B cell (primary cell): ENCODE measurements at regions of chr6 and their contacts with region 1.

Region 1: DNA sequence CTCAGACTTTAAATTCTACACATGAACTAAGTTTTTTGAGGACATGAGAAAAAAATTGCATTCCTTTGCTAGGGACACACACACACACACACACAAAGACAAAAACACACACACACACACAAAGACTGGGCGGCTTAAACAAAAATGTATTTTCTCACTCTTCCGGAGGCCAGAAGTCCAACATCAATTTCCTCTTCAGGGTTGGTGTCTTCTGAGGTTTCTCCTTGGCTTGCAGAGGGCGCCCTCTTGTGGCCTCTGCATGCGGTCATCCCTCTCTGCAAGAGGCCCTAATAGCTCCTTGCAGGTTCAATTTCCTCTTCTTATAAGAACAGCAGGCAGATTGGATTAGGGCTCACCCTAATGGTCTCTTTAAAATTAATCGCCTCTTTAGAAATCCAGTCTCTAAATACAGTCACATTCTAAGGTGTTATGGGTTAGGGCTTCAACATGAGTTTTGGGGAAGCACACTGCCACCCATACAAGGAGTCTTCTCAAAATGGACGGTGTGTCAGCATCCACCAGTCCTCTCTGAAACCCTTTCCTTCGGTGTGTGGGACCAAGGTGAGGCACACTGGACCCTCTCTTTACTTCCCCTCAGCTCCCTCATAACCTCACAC is 61.4 kb downstream of the GPR6 start:
- DNase-seq: peak; percentile 90
- ATAC-seq: peak; percentile 85
- H3K4me3 ChIP-seq: peak overlapping the region; percentile 43 to 62 (median 59)
- H3K4me3 Mint-ChIP-seq: peak overlapping the region; percentile 88
- H3K27ac ChIP-seq: peak overlapping the region; percentile 48 to 66
- H3K27ac Mint-ChIP-seq: peak overlapping the region; percentile 86
- H3K4me1 ChIP-seq: peaks cover 8 to 28% of the 10 kb centered on the region in 2 donors
- H3K4me1 Mint-ChIP-seq: peaks cover 20% of the 10 kb centered on the region
- H3K27me3 ChIP-seq: no peaks in the 10 kb centered on the region
- H3K27me3 Mint-ChIP-seq: no peaks in the 10 kb centered on the region
- CTCF ChIP-seq: peak; percentile 82

Region 2: DNA sequence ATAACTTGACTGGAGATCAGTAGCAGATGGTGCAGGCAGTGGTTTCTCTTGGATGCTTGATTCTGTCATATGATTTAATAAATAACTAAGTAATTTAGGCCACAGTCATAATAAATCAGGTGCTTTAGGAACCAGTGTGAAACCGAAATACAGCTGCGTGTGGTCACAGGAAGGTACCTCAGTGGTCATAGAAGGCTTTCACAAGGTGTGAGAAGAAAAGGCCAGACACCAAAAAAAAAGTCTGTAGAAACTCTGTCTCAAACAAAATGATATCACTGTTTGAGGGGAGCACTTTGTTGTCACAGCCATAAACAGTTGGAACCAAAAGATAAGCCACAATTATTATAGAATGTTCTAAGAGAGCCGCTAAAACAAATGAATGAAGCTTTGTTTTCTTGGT is 1134.7 kb before region 1 on chr6:
- CTCF ChIA-PET with region 1: no interaction called
- POLR2A ChIA-PET with region 1: no interaction called
- intact Hi-C with region 1: no loop called
- DNase-seq: peak; percentile 56
- ATAC-seq: peak; percentile 49
- H3K4me3 ChIP-seq: no peak overlapping the region
- H3K4me3 Mint-ChIP-seq: peak overlapping the region; percentile 44
- H3K27ac ChIP-seq: peak overlapping the region; percentile 46 to 77
- H3K27ac Mint-ChIP-seq: peak overlapping the region; percentile 80
- H3K4me1 ChIP-seq: peaks cover 50 to 54% of the 10 kb centered on the region in 2 donors
- H3K4me1 Mint-ChIP-seq: peaks cover 42% of the 10 kb centered on the region
- H3K27me3 ChIP-seq: no peaks in the 10 kb centered on the region
- H3K27me3 Mint-ChIP-seq: no peaks in the 10 kb centered on the region
- CTCF ChIP-seq: no peak

Region 3: DNA sequence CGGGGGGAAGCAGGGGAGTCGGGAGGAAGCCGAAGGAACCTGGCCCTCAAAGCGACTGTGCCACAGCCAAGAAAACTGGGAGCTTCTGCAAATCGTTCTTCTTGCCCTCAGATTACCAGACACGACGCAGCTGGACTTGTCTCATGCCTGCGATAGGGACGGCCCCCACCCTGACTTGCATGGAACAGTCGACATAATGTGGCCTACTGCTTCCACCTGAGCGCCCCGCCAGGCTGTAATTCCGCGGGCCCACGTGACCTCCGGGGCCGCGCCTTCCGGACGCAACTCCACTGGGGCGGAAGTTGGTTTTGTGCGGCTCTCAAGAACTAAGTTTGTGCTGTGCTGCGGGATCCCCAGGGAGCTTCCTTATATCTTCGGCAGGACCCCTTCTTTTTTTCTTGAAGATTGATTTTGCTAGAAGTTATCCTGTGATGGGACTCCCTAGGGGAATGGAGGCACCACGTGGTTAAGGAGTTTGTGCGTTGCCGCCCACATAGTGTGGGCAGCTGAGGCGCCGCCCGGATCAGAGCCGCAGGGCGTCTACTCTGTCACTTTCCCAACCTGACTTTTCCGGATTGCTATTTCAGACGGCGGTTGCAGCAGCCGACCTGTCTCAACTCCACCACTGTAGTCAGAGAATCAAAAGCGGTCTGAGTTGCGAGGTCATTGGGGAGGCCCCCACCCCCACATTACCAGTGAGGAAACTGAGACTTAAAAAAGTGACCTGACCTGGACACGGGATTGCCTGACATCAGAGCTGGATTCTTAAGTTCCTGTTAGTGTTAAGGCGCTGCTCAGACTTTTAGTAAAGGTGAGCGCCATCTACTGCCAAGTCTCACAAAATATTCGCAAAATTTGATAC is 656.7 kb before region 1 on chr6:
- CTCF ChIA-PET with region 1: interaction called, 4 read pairs
- POLR2A ChIA-PET with region 1: no interaction called
- intact Hi-C with region 1: loop called (anchors 5 kb)
- DNase-seq: peak; percentile 99
- ATAC-seq: peak; percentile 71
- H3K4me3 ChIP-seq: peak overlapping the region; percentile 87 to 98 (median 90)
- H3K4me3 Mint-ChIP-seq: peak overlapping the region; percentile 94
- H3K27ac ChIP-seq: peak overlapping the region; percentile 94 to 97
- H3K27ac Mint-ChIP-seq: peak overlapping the region; percentile 100
- H3K4me1 ChIP-seq: peaks cover 40 to 41% of the 10 kb centered on the region in 2 donors
- H3K4me1 Mint-ChIP-seq: peaks cover 41% of the 10 kb centered on the region
- H3K27me3 ChIP-seq: no peaks in the 10 kb centered on the region
- H3K27me3 Mint-ChIP-seq: no peaks in the 10 kb centered on the region
- CTCF ChIP-seq: peak; percentile 79

Region 4: DNA sequence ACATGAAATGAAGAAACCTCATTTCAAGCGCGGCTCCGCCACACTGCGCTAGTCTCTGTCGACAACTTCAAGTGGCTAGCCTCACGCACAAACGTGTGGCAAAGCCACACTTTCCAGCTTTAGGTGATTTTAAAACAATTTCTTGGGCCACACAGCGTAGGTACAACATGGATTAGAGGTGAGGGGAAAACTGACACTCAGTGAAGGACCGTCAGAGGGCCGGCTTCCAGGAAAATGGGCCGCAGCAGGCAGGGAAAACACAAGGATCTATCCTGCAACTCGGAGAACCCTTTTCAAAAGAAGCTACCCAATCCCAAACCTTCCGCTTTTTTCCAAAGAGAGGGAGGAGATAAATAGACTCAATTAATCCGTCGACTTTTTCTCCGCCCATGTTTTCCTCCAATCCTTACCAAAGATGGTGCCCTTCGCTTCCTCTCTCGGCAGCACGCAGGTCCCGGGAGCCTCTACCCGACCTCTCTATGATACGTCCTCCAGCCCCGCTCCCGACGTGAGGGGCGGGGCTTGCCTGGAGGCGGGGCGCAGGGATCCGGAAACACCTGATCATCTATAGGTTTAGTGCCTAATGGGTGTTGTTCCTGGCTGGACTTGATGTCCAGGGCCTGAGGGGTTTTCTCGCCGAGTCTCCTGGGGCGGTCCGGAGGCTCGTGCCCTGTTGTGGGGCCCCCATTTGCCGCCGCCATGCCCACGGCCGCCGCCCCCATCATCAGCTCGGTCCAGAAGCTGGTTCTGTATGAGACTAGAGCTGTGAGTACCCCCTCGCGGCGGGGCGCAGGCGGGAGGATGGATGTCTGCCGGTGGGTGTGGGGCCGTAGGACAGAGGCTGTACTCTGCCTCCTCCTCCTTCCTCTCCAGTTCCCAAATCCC is 348.5 kb before region 1 on chr6 and contains the starts of genes AK9 and FIG4:
- CTCF ChIA-PET with region 1: interaction called, 32 read pairs
- POLR2A ChIA-PET with region 1: no interaction called
- intact Hi-C with region 1: no loop called
- DNase-seq: peak; percentile 91
- ATAC-seq: peak; percentile 92
- H3K4me3 ChIP-seq: peak within 1 kb of the TSS; percentile 82 to 99 (median 93)
- H3K4me3 Mint-ChIP-seq: peak within 1 kb of the TSS; percentile 90
- H3K27ac ChIP-seq: peak within 1 kb of the TSS; percentile 77 to 93
- H3K27ac Mint-ChIP-seq: peak within 1 kb of the TSS; percentile 99
- H3K4me1 ChIP-seq: peaks cover 26 to 29% of the 10 kb centered on the region in 2 donors
- H3K4me1 Mint-ChIP-seq: peaks cover 39% of the 10 kb centered on the region
- H3K27me3 ChIP-seq: no peaks in the 10 kb centered on the region
- H3K27me3 Mint-ChIP-seq: no peaks in the 10 kb centered on the region
- CTCF ChIP-seq: peak; percentile 26
- total RNA-seq, gene AK9: 26.5 and 27.1 TPM in 2 replicates
- total RNA-seq, gene FIG4: 31.5 and 32.8 TPM in 2 replicates

Region 5: DNA sequence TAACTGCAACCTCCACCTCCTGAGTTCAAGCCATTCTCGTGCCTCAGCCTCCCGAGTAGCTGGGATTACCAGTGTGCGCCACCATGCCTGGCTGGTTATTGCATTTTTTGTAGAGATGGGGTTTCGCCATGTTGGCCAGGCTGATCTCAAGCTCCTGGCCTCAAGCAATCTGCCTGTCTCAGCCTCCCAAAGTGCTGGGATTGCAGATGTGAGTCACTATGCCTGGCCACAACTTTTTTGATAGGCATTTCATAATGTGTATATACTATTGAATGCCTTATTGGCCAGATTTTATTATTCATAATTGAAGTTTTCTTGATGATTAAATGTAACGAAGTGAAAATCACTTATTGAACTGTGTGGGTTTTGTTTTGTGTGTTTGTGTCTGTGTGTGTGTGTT is 320.5 kb before region 1 on chr6:
- CTCF ChIA-PET with region 1: interaction called, 22 read pairs
- POLR2A ChIA-PET with region 1: no interaction called
- intact Hi-C with region 1: no loop called
- DNase-seq: no peak
- ATAC-seq: no peak
- H3K4me3 ChIP-seq: no peak overlapping the region
- H3K4me3 Mint-ChIP-seq: no peak overlapping the region
- H3K27ac ChIP-seq: no peak overlapping the region
- H3K27ac Mint-ChIP-seq: no peak overlapping the region
- H3K4me1 ChIP-seq: peaks cover 9 to 11% of the 10 kb centered on the region in 2 donors
- H3K4me1 Mint-ChIP-seq: peaks cover 15% of the 10 kb centered on the region
- H3K27me3 ChIP-seq: no peaks in the 10 kb centered on the region
- H3K27me3 Mint-ChIP-seq: no peaks in the 10 kb centered on the region
- CTCF ChIP-seq: no peak

Region 6: GRCh38 chr6:109799616-109800015 is 239.9 kb before region 1 on chr6:
- CTCF ChIA-PET with region 1: interaction called, 9 read pairs
- POLR2A ChIA-PET with region 1: no interaction called
- intact Hi-C with region 1: loop called (anchors 10 kb)
- DNase-seq: no peak
- ATAC-seq: no peak
- H3K4me3 ChIP-seq: no peak overlapping the region
- H3K4me3 Mint-ChIP-seq: no peak overlapping the region
- H3K27ac ChIP-seq: no peak overlapping the region
- H3K27ac Mint-ChIP-seq: no peak overlapping the region
- H3K4me1 ChIP-seq: peaks cover 0 to 1% of the 10 kb centered on the region in 2 donors
- H3K4me1 Mint-ChIP-seq: peaks cover 3% of the 10 kb centered on the region
- H3K27me3 ChIP-seq: no peaks in the 10 kb centered on the region
- H3K27me3 Mint-ChIP-seq: no peaks in the 10 kb centered on the region
- CTCF ChIP-seq: no peak

Region 7: DNA sequence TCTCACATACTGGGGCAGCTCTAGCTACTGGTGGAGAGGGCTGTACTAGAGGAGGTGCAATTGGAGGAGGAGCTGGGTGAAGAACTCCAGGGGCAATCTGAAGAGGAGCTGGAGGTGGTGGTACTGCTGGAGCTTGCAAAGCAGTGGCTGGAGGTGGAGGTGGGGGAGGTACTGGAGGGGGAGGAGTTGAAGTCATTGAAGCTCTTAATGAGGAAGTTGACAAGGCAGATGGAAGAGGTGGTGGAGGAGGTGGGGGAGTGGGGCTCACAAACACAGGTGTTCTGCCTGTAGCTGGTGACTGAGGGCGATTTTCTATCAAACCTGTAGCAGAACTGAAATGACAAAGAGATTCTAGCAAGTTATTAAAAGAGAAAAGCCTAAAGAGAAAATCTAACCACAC is 62.4 kb after region 1 on chr6:
- CTCF ChIA-PET with region 1: interaction called, 11 read pairs
- POLR2A ChIA-PET with region 1: no interaction called
- intact Hi-C with region 1: no loop called
- DNase-seq: peak; percentile 76
- ATAC-seq: peak; percentile 97
- H3K4me3 ChIP-seq: no peak overlapping the region
- H3K4me3 Mint-ChIP-seq: no peak overlapping the region
- H3K27ac ChIP-seq: no peak overlapping the region
- H3K27ac Mint-ChIP-seq: no peak overlapping the region
- H3K4me1 ChIP-seq: peaks cover 7 to 12% of the 10 kb centered on the region in 2 donors
- H3K4me1 Mint-ChIP-seq: peaks cover 10% of the 10 kb centered on the region
- H3K27me3 ChIP-seq: no peaks in the 10 kb centered on the region
- H3K27me3 Mint-ChIP-seq: no peaks in the 10 kb centered on the region
- CTCF ChIP-seq: no peak

Region 8: GRCh38 chr6:110207652-110208051 is 168.2 kb after region 1 on chr6:
- CTCF ChIA-PET with region 1: interaction called, 20 read pairs
- POLR2A ChIA-PET with region 1: no interaction called
- intact Hi-C with region 1: loop called (anchors 5 kb)
- DNase-seq: no peak
- ATAC-seq: no peak
- H3K4me3 ChIP-seq: no peak overlapping the region
- H3K4me3 Mint-ChIP-seq: no peak overlapping the region
- H3K27ac ChIP-seq: no peak overlapping the region
- H3K27ac Mint-ChIP-seq: no peak overlapping the region
- H3K4me1 ChIP-seq: peaks cover 25 to 29% of the 10 kb centered on the region in 2 donors
- H3K4me1 Mint-ChIP-seq: peaks cover 40% of the 10 kb centered on the region
- H3K27me3 ChIP-seq: no peaks in the 10 kb centered on the region
- H3K27me3 Mint-ChIP-seq: no peaks in the 10 kb centered on the region
- CTCF ChIP-seq: no peak